Right ventricle myocardium inferior (tissue), 1 donor: ENCODE measurements at regions of chr18 and their contacts with region 1.

Region 1: GRCh38 chr18:69400253-69400975 is at the start of gene DOK6:
- DNase-seq: peak; percentile 80
- ATAC-seq: peak; percentile 89
- total RNA-seq, gene DOK6: 6.3 TPM

Region 2: GRCh38 chr18:69161383-69162028 is 238.9 kb before region 1 on chr18:
- intact Hi-C with region 1: loop called (anchors 5 kb)
- DNase-seq: no peak
- ATAC-seq: peak; percentile 63

Region 3: GRCh38 chr18:69432847-69433246 is 32.4 kb after region 1 on chr18:
- intact Hi-C with region 1: no loop called
- DNase-seq: no peak
- ATAC-seq: no peak

Region 4: DNA sequence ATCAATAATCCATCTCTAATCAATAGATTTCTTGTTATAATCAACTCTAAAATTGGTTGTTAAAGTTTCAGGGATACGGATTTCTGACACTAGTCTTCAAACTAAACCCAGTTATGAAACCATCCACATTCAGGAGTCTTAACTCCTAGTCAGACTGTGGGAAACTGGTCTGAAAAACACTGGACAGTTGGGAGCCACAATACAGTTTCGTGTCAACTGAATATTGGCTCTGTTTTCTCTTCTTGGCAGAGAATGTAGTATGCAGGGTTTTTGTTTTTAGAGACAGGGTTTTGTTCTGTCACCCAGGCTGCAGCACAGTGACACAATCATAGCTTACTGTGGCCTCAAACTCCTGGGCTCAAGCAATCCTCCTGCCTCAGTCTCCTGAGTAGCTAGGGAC is 682.0 kb after region 1 on chr18:
- intact Hi-C with region 1: loop called (anchors 10 kb)
- DNase-seq: no peak
- ATAC-seq: no peak